ENCODE measurements at regions of chr5 and their contacts with region 1.

Region 1: DNA sequence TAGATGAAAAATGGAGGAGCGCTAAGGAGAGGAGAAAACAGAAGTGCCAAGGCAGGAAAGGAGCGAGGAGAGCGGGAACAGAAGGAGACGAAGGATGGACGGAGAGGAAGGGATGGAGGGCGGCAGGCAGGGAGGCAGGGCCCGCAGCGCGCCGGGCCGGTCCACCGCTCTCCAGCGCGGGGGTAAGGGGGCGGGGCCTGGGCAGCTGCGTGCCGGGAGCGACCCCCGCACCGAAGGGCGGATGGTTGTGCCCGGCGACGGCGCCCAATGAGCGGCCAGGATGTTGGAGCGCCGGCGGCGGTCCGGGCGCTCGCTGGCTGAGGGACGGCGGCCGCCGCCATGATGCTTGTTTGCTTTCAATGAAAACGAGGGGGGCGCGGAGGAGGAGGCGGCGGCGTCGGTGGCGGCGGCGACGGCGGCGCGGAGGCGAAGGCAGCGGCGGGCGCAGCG is at the start of gene CNOT6:
- DNase-seq: peak; percentile 86
- ATAC-seq: peak; percentile 88
- H3K4me3 ChIP-seq: peak within 1 kb of the TSS; percentile 87
- H3K27ac ChIP-seq: peak within 1 kb of the TSS; percentile 32; the same call in 1 of the 2 replicates
- H3K4me1 ChIP-seq: peaks cover 17% of the 10 kb centered on the region
- H3K27me3 ChIP-seq: no peaks in the 10 kb centered on the region
- CTCF ChIP-seq: no peak
- total RNA-seq, gene CNOT6: 10.6 and 12.6 TPM in 2 replicates

Region 2: GRCh38 chr5:180605554-180606214 is 111.6 kb after region 1 on chr5:
- CTCF ChIA-PET with region 1: no interaction called
- POLR2A ChIA-PET with region 1: no interaction called
- intact Hi-C with region 1: loop called (anchors 10 kb)
- DNase-seq: peak; percentile 62
- ATAC-seq: peak; percentile 74
- H3K4me3 ChIP-seq: no peak overlapping the region
- H3K27ac ChIP-seq: no peak overlapping the region
- H3K4me1 ChIP-seq: no peaks in the 10 kb centered on the region
- H3K27me3 ChIP-seq: no peaks in the 10 kb centered on the region
- CTCF ChIP-seq: peak; percentile 79

Measured in PC-3 (cell line).